ENCODE measurements at regions of chr7 and their contacts with region 1.

Region 1: DNA sequence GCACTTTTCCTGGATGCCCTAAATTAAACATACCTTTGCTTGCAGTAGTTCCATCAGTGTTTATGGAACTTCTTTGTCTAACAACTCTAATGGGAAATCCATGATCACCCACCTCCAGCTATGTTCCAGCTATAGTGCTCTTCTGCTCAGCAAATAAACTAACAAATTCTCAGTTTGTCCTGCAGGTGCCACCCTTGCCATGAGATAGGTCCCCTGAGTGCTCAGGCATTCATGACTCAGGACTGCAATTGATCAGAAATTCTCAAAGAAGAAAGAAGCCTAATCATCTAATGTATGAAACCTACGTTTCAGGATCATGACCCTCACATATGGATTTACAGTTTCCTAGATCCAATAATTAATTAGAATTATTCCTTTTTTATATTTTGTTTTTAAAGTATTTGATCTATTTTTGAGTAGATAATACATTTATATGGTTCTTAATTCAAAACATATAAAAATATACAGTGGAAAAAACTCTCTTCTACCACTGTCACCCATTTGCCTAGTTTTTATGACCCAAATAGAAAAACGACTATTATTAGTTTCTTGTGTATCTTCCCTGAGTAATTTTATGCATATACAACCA is 48.7 kb upstream of the DYNC1I1 start:
- DNase-seq: no peak
- ATAC-seq: peak; percentile 49
- H3K4me3 ChIP-seq: no peak overlapping the region
- H3K27ac ChIP-seq: no peak overlapping the region
- H3K4me1 ChIP-seq: no peaks in the 10 kb centered on the region
- H3K27me3 ChIP-seq: no peaks in the 10 kb centered on the region

Region 2: DNA sequence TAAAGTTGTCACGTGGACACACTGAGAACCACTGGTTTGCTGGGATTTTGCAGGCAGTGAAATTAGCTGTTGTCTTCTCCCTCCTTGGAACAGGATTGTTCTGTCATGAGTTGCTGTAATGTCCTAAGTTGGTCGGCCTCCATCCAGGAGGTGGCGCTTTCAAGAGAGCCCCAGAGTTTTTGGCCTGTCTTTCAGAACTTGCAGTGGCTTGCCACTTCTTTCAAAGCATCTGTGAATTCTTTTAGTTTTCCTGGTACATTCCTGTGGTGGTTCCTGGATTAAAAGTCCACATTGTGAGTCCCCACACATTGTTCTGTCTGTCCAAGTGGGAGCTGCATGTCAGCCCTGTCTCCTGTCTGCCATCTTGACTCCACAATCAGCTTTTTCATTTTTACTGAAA is 533.2 kb before region 1 on chr7:
- intact Hi-C with region 1: no loop called
- DNase-seq: no peak
- ATAC-seq: no peak
- H3K4me3 ChIP-seq: no peak overlapping the region
- H3K27ac ChIP-seq: no peak overlapping the region
- H3K4me1 ChIP-seq: no peaks in the 10 kb centered on the region
- H3K27me3 ChIP-seq: no peaks in the 10 kb centered on the region

Region 3: DNA sequence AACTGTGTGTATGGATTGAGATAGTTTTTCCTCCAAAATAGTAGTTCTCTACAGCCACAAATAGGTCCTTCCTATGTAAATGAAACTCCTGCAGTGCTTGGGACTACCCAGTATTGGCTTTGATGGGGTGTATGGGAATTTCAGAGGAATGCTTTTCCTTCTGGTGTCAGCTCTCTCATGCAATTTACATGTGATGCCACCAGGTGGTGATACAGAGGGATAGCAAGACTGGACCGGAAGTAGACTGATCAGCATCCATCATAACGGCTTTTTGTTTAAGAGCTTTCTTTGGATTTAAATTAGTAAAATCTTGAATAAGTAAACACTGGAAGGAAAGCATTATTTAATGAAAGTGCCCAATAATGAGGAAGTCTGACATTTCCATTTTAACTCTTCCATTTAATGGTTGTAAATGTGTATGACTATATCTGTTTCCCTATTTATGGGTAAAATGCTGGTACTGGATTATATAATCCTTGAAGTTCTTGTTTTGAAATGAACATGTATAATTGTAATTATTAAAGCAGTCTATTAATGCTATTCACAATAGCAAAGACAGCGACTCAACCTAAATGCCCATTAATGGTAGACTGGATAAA is 71.3 kb after region 1 on chr7:
- intact Hi-C with region 1: loop called in 1 of 2 experiments (anchors 10 kb)
- DNase-seq: no peak
- ATAC-seq: no peak
- H3K4me3 ChIP-seq: no peak overlapping the region
- H3K27ac ChIP-seq: no peak overlapping the region
- H3K4me1 ChIP-seq: peaks cover 0 to 3% of the 10 kb centered on the region in 2 donors
- H3K27me3 ChIP-seq: no peaks in the 10 kb centered on the region

Region 4: DNA sequence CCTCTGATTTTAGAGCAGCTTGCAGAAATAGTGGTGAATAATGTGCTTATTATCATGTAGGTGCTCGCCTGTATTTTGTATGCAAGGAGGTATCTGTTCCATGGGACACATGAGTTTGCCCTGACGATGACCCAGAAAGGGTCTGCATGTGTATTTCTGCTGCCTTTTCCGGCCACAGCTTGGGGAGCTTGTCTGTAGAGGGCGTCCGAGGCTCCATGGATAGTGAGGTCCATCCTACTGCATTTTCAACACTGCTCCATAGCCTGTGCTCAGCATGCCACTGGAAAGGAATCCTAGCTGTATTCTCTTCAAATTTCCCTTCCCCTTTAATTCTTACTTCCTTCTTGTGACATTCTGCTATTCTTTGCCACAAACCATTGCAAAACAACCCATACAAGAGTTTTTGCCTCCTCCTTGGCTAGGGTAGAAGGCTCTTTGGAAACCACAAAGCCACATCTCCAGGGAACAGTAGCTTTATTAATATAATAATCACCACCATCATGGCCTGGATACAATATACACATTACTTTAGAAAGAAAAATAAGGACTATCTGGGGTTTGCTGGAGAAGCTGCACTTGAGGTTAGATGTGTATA is 176.3 kb after region 1 on chr7:
- intact Hi-C with region 1: no loop called
- DNase-seq: no peak
- ATAC-seq: no peak
- H3K4me3 ChIP-seq: no peak overlapping the region
- H3K27ac ChIP-seq: no peak overlapping the region
- H3K4me1 ChIP-seq: peaks cover 0 to 2% of the 10 kb centered on the region in 2 donors
- H3K27me3 ChIP-seq: no peaks in the 10 kb centered on the region